ENCODE measurements at regions of chr19 and their contacts with region 1.

Region 1: GRCh38 chr19:8580710-8581281 is 3.6 kb upstream of the MYO1F start:
- DNase-seq: peak; percentile 78 to 96 (median 88)
- ATAC-seq: peak; percentile 71
- H3K4me3 ChIP-seq: no peak overlapping the region
- H3K4me3 Mint-ChIP-seq: no peak overlapping the region
- H3K27ac ChIP-seq: no peak overlapping the region
- H3K27ac Mint-ChIP-seq: no peak overlapping the region
- H3K4me1 ChIP-seq: peaks cover 51% of the 10 kb centered on the region
- H3K4me1 Mint-ChIP-seq: peaks cover 33% of the 10 kb centered on the region
- H3K27me3 ChIP-seq: no peaks in the 10 kb centered on the region
- H3K27me3 Mint-ChIP-seq: no peaks in the 10 kb centered on the region
- CTCF ChIP-seq: peak; percentile 99

Region 2: GRCh38 chr19:8334458-8335342 is 246.1 kb before region 1 on chr19:
- CTCF ChIA-PET with region 1: interaction called, 11 read pairs
- POLR2A ChIA-PET with region 1: no interaction called
- intact Hi-C with region 1: no loop called
- DNase-seq: peak in 2 of 9 experiments; percentile 47 to 59
- ATAC-seq: peak; percentile 36
- H3K4me3 ChIP-seq: no peak overlapping the region
- H3K4me3 Mint-ChIP-seq: peak overlapping the region; percentile 42
- H3K27ac ChIP-seq: no peak overlapping the region
- H3K27ac Mint-ChIP-seq: no peak overlapping the region
- H3K4me1 ChIP-seq: peaks cover 6% of the 10 kb centered on the region
- H3K4me1 Mint-ChIP-seq: peaks cover 4% of the 10 kb centered on the region
- H3K27me3 ChIP-seq: peaks cover 0 to 11% of the 10 kb centered on the region in 2 experiments
- H3K27me3 Mint-ChIP-seq: peaks cover 24% of the 10 kb centered on the region
- CTCF ChIP-seq: no peak

Region 3: DNA sequence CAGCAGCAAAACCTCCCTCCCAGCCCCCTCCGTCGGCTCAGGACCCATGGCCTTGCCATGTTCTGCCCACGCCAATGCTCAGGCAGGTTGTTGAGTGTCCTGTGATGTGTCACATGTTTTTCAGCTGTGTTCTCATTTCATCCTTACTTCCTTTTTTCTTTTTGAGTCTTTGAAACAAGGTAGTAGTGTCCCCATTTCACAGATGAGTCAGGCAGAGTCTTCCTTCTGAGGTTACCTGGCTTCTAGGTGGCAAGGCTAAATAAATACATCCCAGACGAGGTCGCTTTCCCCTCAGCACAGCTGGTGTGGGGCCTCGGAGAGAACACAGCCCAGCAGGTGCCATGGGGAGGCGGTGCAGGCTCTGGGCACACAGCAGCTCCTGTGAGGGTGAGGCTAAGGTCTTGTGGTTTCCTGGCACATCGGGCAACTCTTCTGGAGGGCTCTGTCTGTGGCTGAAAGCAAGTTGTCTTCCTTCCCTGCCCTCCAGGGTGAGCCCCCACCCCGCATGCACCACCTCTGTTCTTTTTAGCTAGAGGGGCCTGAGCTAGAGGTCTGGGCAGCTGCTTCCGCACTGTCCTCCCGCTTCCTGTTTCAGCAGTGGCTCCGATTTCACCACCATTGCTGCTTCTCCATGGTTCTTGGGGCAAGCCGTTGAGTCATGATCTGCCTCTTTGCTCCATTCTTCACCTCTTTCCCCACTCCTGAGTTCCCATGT is 93.5 kb before region 1 on chr19:
- CTCF ChIA-PET with region 1: interaction called, 362 read pairs
- POLR2A ChIA-PET with region 1: interaction called, 25 read pairs
- intact Hi-C with region 1: loop called (anchors 1 to 2 kb)
- DNase-seq: peak; percentile 29 to 83 (median 67)
- ATAC-seq: peak; percentile 82
- H3K4me3 ChIP-seq: no peak overlapping the region
- H3K4me3 Mint-ChIP-seq: peak overlapping the region; percentile 61
- H3K27ac ChIP-seq: peak overlapping the region in 1 of 2 experiments; percentile 57
- H3K27ac Mint-ChIP-seq: peak overlapping the region; percentile 91
- H3K4me1 ChIP-seq: peaks cover 27% of the 10 kb centered on the region
- H3K4me1 Mint-ChIP-seq: peaks cover 40% of the 10 kb centered on the region
- H3K27me3 ChIP-seq: no peaks in the 10 kb centered on the region
- H3K27me3 Mint-ChIP-seq: no peaks in the 10 kb centered on the region
- CTCF ChIP-seq: no peak

Region 4: GRCh38 chr19:8528500-8528899 is 52.3 kb before region 1 on chr19:
- CTCF ChIA-PET with region 1: interaction called, 202 read pairs
- POLR2A ChIA-PET with region 1: interaction called, 4 read pairs
- intact Hi-C with region 1: no loop called
- DNase-seq: no peak
- ATAC-seq: no peak
- H3K4me3 ChIP-seq: no peak overlapping the region
- H3K4me3 Mint-ChIP-seq: no peak overlapping the region
- H3K27ac ChIP-seq: no peak overlapping the region
- H3K27ac Mint-ChIP-seq: peak overlapping the region; percentile 52
- H3K4me1 ChIP-seq: peaks cover 5% of the 10 kb centered on the region
- H3K4me1 Mint-ChIP-seq: peaks cover 17% of the 10 kb centered on the region
- H3K27me3 ChIP-seq: no peaks in the 10 kb centered on the region
- H3K27me3 Mint-ChIP-seq: no peaks in the 10 kb centered on the region
- CTCF ChIP-seq: no peak

Region 5: DNA sequence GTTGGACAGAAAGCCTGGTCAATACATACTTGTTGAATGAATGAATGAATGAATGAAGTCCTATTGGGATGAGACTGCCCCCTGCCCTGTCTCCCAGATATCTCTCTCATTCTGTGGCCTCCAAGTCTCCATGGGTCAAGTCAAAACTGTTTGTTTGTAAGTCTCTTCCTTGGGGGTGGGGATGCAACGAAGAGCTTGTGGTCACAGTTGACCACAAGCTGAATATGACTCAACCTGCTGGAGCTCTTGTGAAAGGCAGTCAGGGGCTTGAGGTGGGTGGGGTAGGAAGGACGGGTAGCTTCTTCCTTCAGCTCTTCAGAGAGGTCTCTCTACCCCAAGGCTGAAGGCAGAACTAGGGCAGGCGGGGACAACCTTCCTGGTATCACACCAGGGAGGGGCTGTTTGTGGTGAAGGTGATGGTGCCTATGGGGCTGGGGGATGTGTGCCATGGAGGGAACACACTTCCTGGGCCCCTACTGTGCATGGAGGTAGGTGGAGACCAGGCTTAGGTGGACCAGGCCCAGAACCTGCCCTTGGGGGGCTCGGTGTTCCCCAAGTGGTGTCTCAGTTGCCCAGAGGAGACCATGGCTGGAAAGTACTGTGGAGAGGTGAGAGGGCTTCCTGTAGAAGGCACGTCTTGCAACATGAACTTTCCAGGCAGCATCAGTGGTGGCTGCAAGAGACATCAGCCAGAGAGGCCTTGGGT is 11.6 kb before region 1 on chr19:
- CTCF ChIA-PET with region 1: interaction called, 92 read pairs
- POLR2A ChIA-PET with region 1: interaction called, 49 read pairs
- intact Hi-C with region 1: loop called in 1 of 2 experiments (anchors 1 kb)
- DNase-seq: peak; percentile 33 to 94 (median 81)
- ATAC-seq: peak; percentile 80
- H3K4me3 ChIP-seq: peak overlapping the region; percentile 26 to 32
- H3K4me3 Mint-ChIP-seq: peak overlapping the region; percentile 63
- H3K27ac ChIP-seq: peak overlapping the region; percentile 38 to 84
- H3K27ac Mint-ChIP-seq: peak overlapping the region; percentile 93
- H3K4me1 ChIP-seq: peaks cover 51% of the 10 kb centered on the region
- H3K4me1 Mint-ChIP-seq: peaks cover 73% of the 10 kb centered on the region
- H3K27me3 ChIP-seq: no peaks in the 10 kb centered on the region
- H3K27me3 Mint-ChIP-seq: no peaks in the 10 kb centered on the region
- CTCF ChIP-seq: no peak

Region 6: DNA sequence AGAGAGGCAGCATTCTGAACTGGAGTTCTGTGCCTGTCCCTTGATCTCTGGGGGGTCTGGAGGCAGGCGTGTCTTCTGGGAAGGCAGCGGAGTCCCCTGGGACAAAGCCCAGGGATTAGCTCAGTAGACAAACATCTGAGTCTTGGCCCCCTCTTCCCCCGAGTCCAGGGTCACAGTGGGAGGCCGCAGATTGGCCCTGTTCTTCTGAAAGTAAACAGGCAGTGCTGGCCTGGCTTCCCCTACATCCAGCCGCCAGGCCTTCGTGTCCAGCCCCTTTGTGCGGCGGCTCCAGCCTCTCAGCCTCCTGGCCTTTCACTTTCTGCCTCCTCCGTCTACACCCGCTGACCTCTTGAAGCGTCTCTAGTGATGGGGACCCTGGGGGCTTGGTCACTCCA is 50.6 kb after region 1 on chr19:
- CTCF ChIA-PET with region 1: interaction called, 15 read pairs
- POLR2A ChIA-PET with region 1: interaction called, 3 read pairs
- intact Hi-C with region 1: no loop called
- DNase-seq: no peak
- ATAC-seq: no peak
- H3K4me3 ChIP-seq: no peak overlapping the region
- H3K4me3 Mint-ChIP-seq: no peak overlapping the region
- H3K27ac ChIP-seq: no peak overlapping the region
- H3K27ac Mint-ChIP-seq: no peak overlapping the region
- H3K4me1 ChIP-seq: no peaks in the 10 kb centered on the region
- H3K4me1 Mint-ChIP-seq: no peaks in the 10 kb centered on the region
- H3K27me3 ChIP-seq: no peaks in the 10 kb centered on the region
- H3K27me3 Mint-ChIP-seq: no peaks in the 10 kb centered on the region
- CTCF ChIP-seq: no peak

Region 7: GRCh38 chr19:8697671-8698432 is 117.1 kb after region 1 on chr19:
- CTCF ChIA-PET with region 1: interaction called, 12 read pairs
- POLR2A ChIA-PET with region 1: no interaction called
- intact Hi-C with region 1: loop called (anchors 1 kb)
- DNase-seq: peak in 2 of 9 experiments; percentile 22 to 35
- ATAC-seq: no peak
- H3K4me3 ChIP-seq: no peak overlapping the region
- H3K4me3 Mint-ChIP-seq: no peak overlapping the region
- H3K27ac ChIP-seq: no peak overlapping the region
- H3K27ac Mint-ChIP-seq: no peak overlapping the region
- H3K4me1 ChIP-seq: peaks cover 25% of the 10 kb centered on the region
- H3K4me1 Mint-ChIP-seq: peaks cover 29% of the 10 kb centered on the region
- H3K27me3 ChIP-seq: no peaks in the 10 kb centered on the region
- H3K27me3 Mint-ChIP-seq: no peaks in the 10 kb centered on the region
- CTCF ChIP-seq: no peak

Region 8: DNA sequence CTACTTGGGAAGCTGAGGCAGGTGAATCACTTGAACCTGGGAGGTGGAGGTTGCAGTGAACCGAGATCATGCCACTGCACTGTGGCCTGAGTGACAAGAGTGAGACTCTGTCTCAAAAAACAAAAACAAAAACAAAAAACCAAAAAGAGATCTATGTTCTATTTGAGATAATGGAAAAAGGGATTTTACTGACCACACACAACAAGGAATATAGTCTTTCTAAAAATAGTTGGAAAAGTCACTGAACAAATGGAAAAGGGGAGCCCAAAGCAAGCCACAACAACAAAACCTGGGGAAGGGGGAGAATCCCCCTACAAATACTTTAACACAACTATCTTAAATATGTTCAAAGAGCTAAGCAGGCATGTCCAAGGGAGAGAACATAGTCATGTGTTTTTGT is 214.0 kb after region 1 on chr19:
- CTCF ChIA-PET with region 1: no interaction called
- POLR2A ChIA-PET with region 1: no interaction called
- intact Hi-C with region 1: no loop called
- DNase-seq: no peak
- ATAC-seq: no peak
- H3K4me3 ChIP-seq: no peak overlapping the region
- H3K4me3 Mint-ChIP-seq: no peak overlapping the region
- H3K27ac ChIP-seq: no peak overlapping the region
- H3K27ac Mint-ChIP-seq: no peak overlapping the region
- H3K4me1 ChIP-seq: no peaks in the 10 kb centered on the region
- H3K4me1 Mint-ChIP-seq: no peaks in the 10 kb centered on the region
- H3K27me3 ChIP-seq: no peaks in the 10 kb centered on the region
- H3K27me3 Mint-ChIP-seq: peaks cover 2% of the 10 kb centered on the region
- CTCF ChIP-seq: no peak